ENCODE measurements at regions of chr11 and their contacts with region 1.

Region 1: DNA sequence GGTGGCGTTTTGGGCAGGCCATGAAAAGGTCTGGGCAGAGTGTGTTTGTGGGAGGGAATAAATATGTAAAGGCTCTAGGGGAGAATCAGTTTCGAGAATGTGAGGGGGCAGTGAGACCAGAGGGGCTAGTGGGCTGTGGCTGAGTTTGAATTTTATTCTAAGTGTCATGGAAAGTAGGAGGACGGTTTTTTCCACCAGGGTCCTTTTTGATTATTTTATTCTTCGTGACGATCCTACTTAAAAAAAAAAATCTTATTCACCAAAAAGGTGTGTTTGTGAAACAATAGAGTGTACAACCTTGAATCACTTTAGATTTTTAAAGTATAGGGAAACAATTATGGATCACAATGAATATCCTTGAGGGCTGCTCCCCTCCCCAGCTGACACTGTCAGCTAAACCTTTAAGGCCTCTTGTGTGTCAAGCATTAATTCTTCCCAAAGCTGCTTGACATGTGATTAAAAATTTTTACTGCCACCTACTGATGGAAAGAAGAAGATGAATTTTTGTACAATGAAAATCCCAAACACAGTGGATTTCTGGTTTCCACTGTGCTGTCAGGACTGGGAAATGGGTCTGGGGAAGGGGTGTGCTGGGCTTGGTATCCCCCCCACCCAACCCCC is 107.5 kb upstream of the OR4B1 start:
- H3K4me3 ChIP-seq: 0 out of 2 replicates have a peak overlapping the region, but pooled peaks have one; percentile 35
- H3K27ac ChIP-seq: no peak overlapping the region; the same call in 1 of the 2 replicates
- H3K4me1 ChIP-seq: peaks cover 4% of the 10 kb centered on the region; the same call in 1 of the 2 replicates
- CTCF ChIP-seq: no peak

Region 2: GRCh38 chr11:47852053-47852452 is 257.1 kb before region 1 on chr11:
- CTCF ChIA-PET with region 1: interaction called, 11 read pairs
- POLR2A ChIA-PET with region 1: no interaction called
- H3K4me3 ChIP-seq: no peak overlapping the region
- H3K27ac ChIP-seq: no peak overlapping the region
- H3K4me1 ChIP-seq: no peaks in the 10 kb centered on the region
- CTCF ChIP-seq: no peak

Region 3: GRCh38 chr11:47932544-47932943 is 176.6 kb before region 1 on chr11:
- CTCF ChIA-PET with region 1: interaction called, 122 read pairs
- POLR2A ChIA-PET with region 1: interaction called, 10 read pairs
- H3K4me3 ChIP-seq: no peak overlapping the region
- H3K27ac ChIP-seq: no peak overlapping the region
- H3K4me1 ChIP-seq: no peaks in the 10 kb centered on the region
- CTCF ChIP-seq: no peak

Region 4: DNA sequence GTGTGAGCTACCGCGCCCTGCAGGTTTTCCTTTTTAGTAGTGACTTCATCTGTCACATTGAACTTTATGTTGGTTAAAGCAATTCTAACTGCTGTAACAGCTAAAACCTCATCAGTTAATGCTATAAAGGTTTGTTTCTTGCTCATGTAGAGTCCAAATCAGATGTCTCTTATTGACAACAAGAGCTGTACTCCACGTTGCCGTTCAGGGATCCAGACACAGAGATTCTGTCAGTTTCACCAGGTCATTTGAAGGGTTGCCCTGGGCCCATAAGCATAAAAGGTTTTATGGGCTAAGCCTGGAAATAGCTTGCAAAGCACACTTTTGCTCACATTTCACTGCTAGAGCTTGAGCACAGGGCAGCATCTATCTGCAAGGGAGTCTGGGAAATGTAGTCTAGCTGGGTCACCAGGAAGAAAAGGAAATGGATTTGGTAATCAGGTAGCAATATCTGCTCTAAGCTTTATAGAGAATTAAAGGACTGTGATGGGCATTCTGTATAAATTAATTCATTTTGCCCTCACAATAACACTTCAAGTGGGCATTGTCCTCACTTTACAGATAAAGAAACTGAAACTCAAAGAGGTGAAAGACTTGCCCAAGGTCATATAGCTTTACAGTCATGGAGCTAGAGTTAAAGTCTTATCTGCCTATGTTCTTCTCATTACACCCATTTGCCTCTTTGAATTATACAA is 153.9 kb before region 1 on chr11:
- CTCF ChIA-PET with region 1: interaction called, 11 read pairs
- POLR2A ChIA-PET with region 1: no interaction called
- H3K4me3 ChIP-seq: no peak overlapping the region
- H3K27ac ChIP-seq: no peak overlapping the region
- H3K4me1 ChIP-seq: no peaks in the 10 kb centered on the region
- CTCF ChIP-seq: no peak

Measured in HEK293 (cell line).